CD4-positive, alpha-beta T cell (primary cell): ENCODE measurements at regions of chr10 and their contacts with region 1.

Region 1: DNA sequence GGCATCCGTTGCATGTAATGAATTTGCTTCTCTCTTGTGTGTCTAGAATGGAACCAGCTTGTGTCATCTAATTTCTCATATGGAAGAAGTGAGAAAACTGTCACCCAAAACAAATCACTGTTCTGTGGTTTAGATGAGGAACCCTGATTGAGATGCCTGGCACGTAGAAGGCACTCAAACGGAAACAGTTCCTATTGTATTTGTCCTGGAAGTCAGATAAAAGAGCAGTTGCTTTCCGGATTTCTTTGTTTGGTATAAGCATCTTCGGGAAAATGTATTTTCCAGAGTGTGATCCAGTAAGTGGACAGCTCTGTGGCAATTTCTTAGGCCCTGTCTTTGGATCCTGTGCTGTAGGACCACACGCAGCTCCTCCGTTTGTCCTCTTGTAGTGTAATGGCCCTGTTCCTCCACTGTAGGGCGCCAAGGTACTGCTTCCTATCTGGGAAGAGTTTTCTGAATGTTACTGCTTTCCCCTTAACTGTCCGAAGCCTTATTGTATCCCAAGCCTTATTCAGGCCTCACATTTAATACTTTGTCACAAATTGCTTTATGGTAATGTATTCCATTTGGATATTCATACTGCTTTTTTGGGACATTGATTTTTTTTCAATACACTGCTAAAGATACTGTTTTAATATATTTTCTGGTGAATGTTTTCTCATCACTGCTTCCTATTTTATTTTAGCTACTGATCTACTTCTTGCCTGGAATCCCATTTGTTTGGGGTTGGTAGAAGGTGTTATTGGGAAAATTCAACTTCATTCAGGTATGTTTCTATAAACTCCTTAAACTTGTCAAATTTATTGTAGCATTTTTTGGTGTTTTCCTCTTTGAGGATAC is 24.8 kb downstream of the INPP5F start:
- DNase-seq: peak; percentile 30 to 77 (median 44)
- ATAC-seq: peak; percentile 99
- H3K4me3 ChIP-seq: no peak overlapping the region
- H3K4me3 Mint-ChIP-seq: no peak overlapping the region
- H3K27ac ChIP-seq: no peak overlapping the region
- H3K27ac Mint-ChIP-seq: no peak overlapping the region
- H3K4me1 ChIP-seq: no peaks in the 10 kb centered on the region
- H3K4me1 Mint-ChIP-seq: peaks cover 14% of the 10 kb centered on the region
- H3K27me3 ChIP-seq: no peaks in the 10 kb centered on the region
- H3K27me3 Mint-ChIP-seq: no peaks in the 10 kb centered on the region
- CTCF ChIP-seq: peak; percentile 85

Region 2: DNA sequence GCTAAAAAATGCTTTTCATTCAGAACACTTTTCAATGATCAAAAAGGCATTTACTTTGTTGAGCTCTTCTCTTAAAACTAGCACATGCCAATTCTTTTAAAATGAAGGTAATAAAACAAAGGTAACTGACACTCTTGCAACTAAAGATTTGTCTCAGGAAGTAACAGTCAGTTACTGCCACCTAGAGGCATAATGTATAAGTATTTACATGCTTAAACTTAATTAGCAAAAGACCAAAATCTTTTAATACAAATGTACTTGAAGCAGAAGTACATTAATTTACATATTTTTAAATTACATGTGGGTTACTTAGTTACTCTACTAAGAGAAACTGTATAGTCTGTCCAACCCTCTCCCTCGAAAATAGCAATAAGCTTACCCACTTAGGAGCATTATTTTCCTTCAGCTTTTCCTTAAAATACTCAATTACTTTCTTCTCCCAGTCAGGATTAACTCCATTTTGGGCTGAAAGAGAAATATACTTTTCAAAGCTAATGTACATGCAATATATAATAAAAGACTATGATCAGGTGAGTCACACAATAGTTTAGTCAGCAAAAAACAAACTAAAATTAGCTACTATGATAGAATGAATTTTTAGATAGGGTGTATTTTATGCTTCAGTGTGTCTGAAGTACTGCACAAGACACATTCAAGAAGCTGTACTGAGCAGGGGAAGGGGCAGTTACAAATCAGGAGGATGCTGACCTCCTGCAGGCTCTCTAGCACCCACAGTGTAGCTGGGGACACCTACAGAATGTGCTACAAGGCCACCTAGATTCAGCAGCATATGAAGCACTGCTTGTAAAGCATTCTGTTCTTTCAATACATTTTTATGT is 109.0 kb after region 1 on chr10:
- CTCF ChIA-PET with region 1: interaction called, 13 read pairs
- POLR2A ChIA-PET with region 1: interaction called, 4 read pairs
- intact Hi-C with region 1: loop called (anchors 1 to 2 kb)
- DNase-seq: peak in 3 of 14 experiments; percentile 65 to 73 (median 72)
- ATAC-seq: peak; percentile 60
- H3K4me3 ChIP-seq: no peak overlapping the region
- H3K4me3 Mint-ChIP-seq: no peak overlapping the region
- H3K27ac ChIP-seq: no peak overlapping the region
- H3K27ac Mint-ChIP-seq: peak overlapping the region; percentile 4
- H3K4me1 ChIP-seq: peaks cover 4% of the 10 kb centered on the region
- H3K4me1 Mint-ChIP-seq: peaks cover 46% of the 10 kb centered on the region
- H3K27me3 ChIP-seq: no peaks in the 10 kb centered on the region
- H3K27me3 Mint-ChIP-seq: no peaks in the 10 kb centered on the region
- CTCF ChIP-seq: peak; percentile 88

Region 3: DNA sequence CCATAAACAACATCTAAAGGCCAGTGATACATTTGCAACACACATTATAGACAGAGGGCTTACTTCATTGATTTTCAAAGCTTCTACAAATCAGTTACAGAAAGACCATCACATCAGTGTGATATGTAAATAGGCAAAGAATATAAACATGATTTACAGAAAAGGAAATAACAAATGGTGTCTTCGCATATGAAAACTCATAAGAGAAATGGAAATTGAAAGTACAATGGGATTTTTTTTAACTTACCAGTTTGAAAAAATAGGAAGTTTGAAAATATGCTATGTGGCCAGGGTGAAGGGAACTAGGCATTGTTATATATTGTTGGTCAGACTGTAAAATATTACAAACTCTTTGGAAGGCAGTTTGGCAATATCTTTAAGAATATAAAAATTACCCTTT is 169.2 kb after region 1 on chr10:
- CTCF ChIA-PET with region 1: no interaction called
- POLR2A ChIA-PET with region 1: no interaction called
- intact Hi-C with region 1: loop called (anchors 5 kb)
- DNase-seq: peak in 1 of 14 experiments; percentile 6
- ATAC-seq: no peak
- H3K4me3 ChIP-seq: no peak overlapping the region
- H3K4me3 Mint-ChIP-seq: no peak overlapping the region
- H3K27ac ChIP-seq: no peak overlapping the region
- H3K27ac Mint-ChIP-seq: no peak overlapping the region
- H3K4me1 ChIP-seq: no peaks in the 10 kb centered on the region
- H3K4me1 Mint-ChIP-seq: no peaks in the 10 kb centered on the region
- H3K27me3 ChIP-seq: no peaks in the 10 kb centered on the region
- H3K27me3 Mint-ChIP-seq: no peaks in the 10 kb centered on the region
- CTCF ChIP-seq: no peak

Region 4: GRCh38 chr10:120336911-120337540 is 586.4 kb after region 1 on chr10:
- CTCF ChIA-PET with region 1: interaction called, 4 read pairs
- POLR2A ChIA-PET with region 1: no interaction called
- intact Hi-C with region 1: loop called in 1 of 2 experiments (anchors 2 kb)
- DNase-seq: peak; percentile 18 to 59 (median 40)
- ATAC-seq: no peak
- H3K4me3 ChIP-seq: no peak overlapping the region
- H3K4me3 Mint-ChIP-seq: no peak overlapping the region
- H3K27ac ChIP-seq: no peak overlapping the region
- H3K27ac Mint-ChIP-seq: no peak overlapping the region
- H3K4me1 ChIP-seq: no peaks in the 10 kb centered on the region
- H3K4me1 Mint-ChIP-seq: no peaks in the 10 kb centered on the region
- H3K27me3 ChIP-seq: no peaks in the 10 kb centered on the region
- H3K27me3 Mint-ChIP-seq: peaks cover 14% of the 10 kb centered on the region
- CTCF ChIP-seq: peak; percentile 88